MCF 10A (cell line): ENCODE measurements at regions of chr1 and their contacts with region 1.

Region 1: GRCh38 chr1:85344256-85344694 is 67.8 kb upstream of the BCL10 start:
- DNase-seq: peak; percentile 45
- H3K4me3 Mint-ChIP-seq: no peak overlapping the region
- H3K27ac Mint-ChIP-seq: peak overlapping the region; percentile 16
- H3K4me1 Mint-ChIP-seq: peaks cover 16% of the 10 kb centered on the region
- H3K27me3 Mint-ChIP-seq: no peaks in the 10 kb centered on the region
- CTCF ChIP-seq: peak; percentile 56

Region 2: DNA sequence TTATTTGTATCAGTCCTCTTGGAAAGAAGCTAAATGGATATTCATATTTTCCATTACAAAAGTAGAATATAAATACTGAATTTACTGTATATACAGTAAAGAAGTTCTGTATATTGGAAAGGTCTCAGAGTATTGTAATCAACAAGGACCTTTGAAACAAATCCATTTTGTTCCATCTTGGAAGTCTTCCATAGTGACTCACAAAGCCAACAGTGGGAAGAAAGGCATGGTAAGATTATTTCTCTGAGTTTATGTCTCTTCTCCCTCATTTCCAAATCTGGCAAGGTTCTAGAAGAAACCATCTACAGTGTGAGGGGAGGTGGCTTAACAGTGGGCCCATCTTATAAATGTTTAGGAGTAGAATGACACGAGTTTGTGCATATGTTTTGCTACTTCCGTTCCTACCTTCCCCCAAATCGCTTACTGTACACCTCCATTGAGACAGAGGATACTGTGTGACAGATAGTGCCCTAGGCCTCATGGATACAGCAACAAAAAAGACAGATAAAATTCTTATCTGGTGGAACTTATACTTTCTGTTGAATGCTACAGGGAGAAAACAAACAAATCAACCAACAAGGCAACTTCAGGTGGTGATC is 631.9 kb before region 1 on chr1:
- CTCF ChIA-PET with region 1: no interaction called
- POLR2A ChIA-PET with region 1: no interaction called
- intact Hi-C with region 1: no loop called
- DNase-seq: peak; percentile 56
- H3K4me3 Mint-ChIP-seq: no peak overlapping the region
- H3K27ac Mint-ChIP-seq: no peak overlapping the region
- H3K4me1 Mint-ChIP-seq: peaks cover 4% of the 10 kb centered on the region
- H3K27me3 Mint-ChIP-seq: no peaks in the 10 kb centered on the region
- CTCF ChIP-seq: no peak

Region 3: DNA sequence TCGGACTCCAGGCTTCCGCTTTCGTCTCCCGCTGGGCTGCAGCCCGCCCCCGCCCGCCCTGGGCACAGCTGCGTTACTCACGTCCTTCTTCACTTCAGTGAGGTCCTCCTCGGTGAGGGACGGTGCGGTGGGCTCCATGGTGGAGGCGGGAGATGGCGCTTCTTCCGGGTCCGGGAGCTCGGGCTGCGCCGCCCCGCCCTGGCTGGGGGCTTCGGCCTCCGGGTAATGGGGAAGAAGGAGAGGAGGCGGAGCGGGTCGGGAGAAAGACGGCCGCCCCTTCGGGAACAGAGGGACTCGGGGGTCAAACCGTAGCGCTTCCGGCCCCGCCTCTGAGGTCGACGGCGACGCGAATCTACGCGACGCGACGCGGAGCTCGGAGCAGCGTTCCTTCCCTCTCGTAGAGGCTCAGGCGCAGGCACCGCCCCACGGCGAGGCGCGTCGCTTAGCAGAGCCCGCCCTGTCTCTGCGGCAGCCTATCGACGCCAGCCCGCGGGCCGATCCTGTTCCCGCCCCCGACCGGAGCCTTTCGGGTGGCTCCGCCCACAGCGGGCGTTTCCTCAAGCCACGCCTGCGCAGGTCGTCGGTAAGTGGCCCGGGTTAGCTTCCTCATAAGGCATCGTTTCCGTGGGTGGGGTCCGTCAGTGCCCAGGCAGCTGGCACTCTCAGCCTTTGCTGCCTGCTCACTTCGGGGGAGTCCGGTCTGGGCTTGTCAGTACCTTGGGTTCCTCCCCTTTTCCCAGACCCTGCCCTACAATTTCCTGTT is 67.9 kb before region 1 on chr1 and contains the start of gene BCL10:
- CTCF ChIA-PET with region 1: interaction called, 6 read pairs
- POLR2A ChIA-PET with region 1: interaction called, 11 read pairs
- intact Hi-C with region 1: no loop called
- DNase-seq: peak; percentile 98
- H3K4me3 Mint-ChIP-seq: peak within 1 kb of the TSS; percentile 77
- H3K27ac Mint-ChIP-seq: peak within 1 kb of the TSS; percentile 85
- H3K4me1 Mint-ChIP-seq: peaks cover 40% of the 10 kb centered on the region
- H3K27me3 Mint-ChIP-seq: no peaks in the 10 kb centered on the region
- CTCF ChIP-seq: no peak
- total RNA-seq, gene BCL10: 43.9 and 55.8 TPM in 2 replicates

Region 4: GRCh38 chr1:85307987-85308832 is 36.1 kb before region 1 on chr1:
- CTCF ChIA-PET with region 1: interaction called, 10 read pairs
- POLR2A ChIA-PET with region 1: no interaction called
- intact Hi-C with region 1: loop called (anchors 5 kb)
- DNase-seq: peak; percentile 90
- H3K4me3 Mint-ChIP-seq: no peak overlapping the region
- H3K27ac Mint-ChIP-seq: no peak overlapping the region
- H3K4me1 Mint-ChIP-seq: peaks cover 1% of the 10 kb centered on the region
- H3K27me3 Mint-ChIP-seq: no peaks in the 10 kb centered on the region
- CTCF ChIP-seq: peak; percentile 94

Region 5: GRCh38 chr1:85330711-85331290 is 13.5 kb before region 1 on chr1:
- CTCF ChIA-PET with region 1: interaction called, 16 read pairs
- POLR2A ChIA-PET with region 1: interaction called, 12 read pairs
- intact Hi-C with region 1: no loop called
- DNase-seq: peak; percentile 78
- H3K4me3 Mint-ChIP-seq: peak overlapping the region; percentile 12
- H3K27ac Mint-ChIP-seq: peak overlapping the region; percentile 90
- H3K4me1 Mint-ChIP-seq: peaks cover 36% of the 10 kb centered on the region
- H3K27me3 Mint-ChIP-seq: no peaks in the 10 kb centered on the region
- CTCF ChIP-seq: no peak

Region 6: GRCh38 chr1:85386068-85386722 is 41.9 kb after region 1 on chr1:
- CTCF ChIA-PET with region 1: interaction called, 11 read pairs
- POLR2A ChIA-PET with region 1: no interaction called
- intact Hi-C with region 1: no loop called
- DNase-seq: no peak
- H3K4me3 Mint-ChIP-seq: no peak overlapping the region
- H3K27ac Mint-ChIP-seq: no peak overlapping the region
- H3K4me1 Mint-ChIP-seq: no peaks in the 10 kb centered on the region
- H3K27me3 Mint-ChIP-seq: no peaks in the 10 kb centered on the region
- CTCF ChIP-seq: no peak

Region 7: GRCh38 chr1:85406887-85407533 is 62.7 kb after region 1 on chr1:
- CTCF ChIA-PET with region 1: interaction called, 19 read pairs
- POLR2A ChIA-PET with region 1: no interaction called
- intact Hi-C with region 1: no loop called
- DNase-seq: peak; percentile 81
- H3K4me3 Mint-ChIP-seq: no peak overlapping the region
- H3K27ac Mint-ChIP-seq: peak overlapping the region; percentile 92
- H3K4me1 Mint-ChIP-seq: peaks cover 14% of the 10 kb centered on the region
- H3K27me3 Mint-ChIP-seq: no peaks in the 10 kb centered on the region
- CTCF ChIP-seq: no peak

Region 8: DNA sequence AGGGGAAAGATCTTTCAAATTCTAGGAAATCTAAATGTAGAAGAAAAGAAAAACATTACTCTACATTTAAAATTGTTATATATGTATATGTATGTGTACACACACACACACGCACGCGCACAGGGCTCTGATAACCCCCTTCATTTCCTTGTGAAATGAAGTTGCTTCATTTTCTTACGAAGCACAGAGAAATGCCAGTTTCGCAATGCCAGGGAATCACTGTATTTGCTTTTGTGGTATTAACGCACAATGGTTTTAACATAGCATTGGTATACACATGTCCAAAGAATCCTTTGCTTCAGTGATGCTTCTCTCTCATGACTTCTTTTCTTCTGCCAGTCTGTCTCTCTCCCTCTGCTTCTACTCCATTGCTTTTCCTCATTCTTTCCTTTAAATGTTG is 129.1 kb after region 1 on chr1:
- CTCF ChIA-PET with region 1: no interaction called
- POLR2A ChIA-PET with region 1: no interaction called
- intact Hi-C with region 1: no loop called
- DNase-seq: peak; percentile 93
- H3K4me3 Mint-ChIP-seq: no peak overlapping the region
- H3K27ac Mint-ChIP-seq: peak overlapping the region; percentile 28
- H3K4me1 Mint-ChIP-seq: peaks cover 13% of the 10 kb centered on the region
- H3K27me3 Mint-ChIP-seq: no peaks in the 10 kb centered on the region
- CTCF ChIP-seq: no peak